Activated naive CD4-positive, alpha-beta T cell treated with anti-CD3 and anti-CD28 coated beads for 36 hours (primary cell): ENCODE measurements at regions of chr12 and their contacts with region 1.

Region 1: DNA sequence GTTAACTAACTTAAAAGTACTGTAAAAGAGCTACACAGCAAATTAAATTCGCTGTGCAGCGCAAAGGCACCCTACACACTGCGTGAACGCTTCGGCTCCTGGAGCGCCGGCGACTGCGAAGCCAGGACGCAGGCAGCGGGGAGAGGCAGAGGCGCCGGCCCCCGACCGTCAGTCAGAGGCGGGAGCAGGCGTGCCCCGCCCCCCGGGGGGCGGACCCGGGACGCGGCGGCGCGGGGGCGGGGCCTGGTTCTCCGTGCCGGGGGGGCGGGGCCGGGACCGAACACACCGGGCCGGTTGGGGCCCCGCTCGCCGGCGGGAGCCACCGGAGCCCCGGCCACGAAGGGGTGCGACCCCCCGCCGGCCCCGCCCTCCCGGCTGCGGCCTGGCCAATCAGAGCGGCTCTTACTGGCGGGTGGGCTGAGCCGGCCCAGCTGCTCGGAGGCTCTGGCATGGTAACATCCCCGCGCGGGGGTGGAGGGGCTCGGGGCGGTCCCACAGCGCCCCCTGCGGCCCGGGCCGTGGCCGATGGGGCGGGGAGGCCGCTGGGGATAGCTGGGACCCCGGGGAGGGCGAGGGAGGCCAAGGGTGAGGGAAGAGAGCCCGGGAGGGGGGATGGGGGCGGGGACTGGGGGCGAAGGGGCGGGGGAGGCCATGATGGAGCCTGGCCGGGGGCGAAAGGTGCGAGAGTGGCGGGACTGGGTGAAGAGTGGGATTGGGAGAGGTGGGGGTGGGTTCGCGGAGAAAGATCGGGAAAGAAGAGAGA is at the start of gene PRPF40B:
- DNase-seq: peak; percentile 85
- H3K4me3 Mint-ChIP-seq: peak within 1 kb of the TSS; percentile 79
- H3K27ac Mint-ChIP-seq: peak within 1 kb of the TSS; percentile 76
- H3K4me1 Mint-ChIP-seq: peaks cover 20% of the 10 kb centered on the region
- H3K27me3 Mint-ChIP-seq: peaks cover 12% of the 10 kb centered on the region
- total RNA-seq, gene PRPF40B: 7.2 to 7.7 TPM

Region 2: GRCh38 chr12:49358483-49359141 is 264.7 kb before region 1 on chr12:
- CTCF ChIA-PET with region 1: interaction called, 12 read pairs
- intact Hi-C with region 1: no loop called
- DNase-seq: peak; percentile 75
- H3K4me3 Mint-ChIP-seq: no peak overlapping the region
- H3K27ac Mint-ChIP-seq: no peak overlapping the region
- H3K4me1 Mint-ChIP-seq: peaks cover 2% of the 10 kb centered on the region
- H3K27me3 Mint-ChIP-seq: peaks cover 14% of the 10 kb centered on the region

Region 3: GRCh38 chr12:49567611-49568441 is 55.5 kb before region 1 on chr12 and contains the start of gene MCRS1:
- CTCF ChIA-PET with region 1: interaction called, 3 read pairs
- intact Hi-C with region 1: loop called (anchors 1 kb)
- DNase-seq: peak; percentile 91
- H3K4me3 Mint-ChIP-seq: peak within 1 kb of the TSS; percentile 99
- H3K27ac Mint-ChIP-seq: peak within 1 kb of the TSS; percentile 98
- H3K4me1 Mint-ChIP-seq: peaks cover 50% of the 10 kb centered on the region
- H3K27me3 Mint-ChIP-seq: no peaks in the 10 kb centered on the region
- total RNA-seq, gene MCRS1: 49.8 to 52.7 TPM

Region 4: GRCh38 chr12:49673446-49674317 is 50.4 kb after region 1 on chr12:
- CTCF ChIA-PET with region 1: interaction called, 3 read pairs
- intact Hi-C with region 1: loop called (anchors 2 kb)
- DNase-seq: no peak
- H3K4me3 Mint-ChIP-seq: no peak overlapping the region
- H3K27ac Mint-ChIP-seq: peak overlapping the region; percentile 98
- H3K4me1 Mint-ChIP-seq: peaks cover 85% of the 10 kb centered on the region
- H3K27me3 Mint-ChIP-seq: no peaks in the 10 kb centered on the region

Region 5: GRCh38 chr12:49828133-49829091 is 205.1 kb after region 1 on chr12 and contains the start of gene NCKAP5L:
- CTCF ChIA-PET with region 1: no interaction called
- intact Hi-C with region 1: loop called (anchors 2 kb)
- DNase-seq: peak; percentile 94
- H3K4me3 Mint-ChIP-seq: peak within 1 kb of the TSS; percentile 92
- H3K27ac Mint-ChIP-seq: peak within 1 kb of the TSS; percentile 86
- H3K4me1 Mint-ChIP-seq: peaks cover 27% of the 10 kb centered on the region
- H3K27me3 Mint-ChIP-seq: no peaks in the 10 kb centered on the region
- total RNA-seq, gene NCKAP5L: 2.8 TPM